Common myeloid progenitor, CD34-positive (primary cell): ENCODE measurements at regions of chr5 and their contacts with region 1.

Region 1: DNA sequence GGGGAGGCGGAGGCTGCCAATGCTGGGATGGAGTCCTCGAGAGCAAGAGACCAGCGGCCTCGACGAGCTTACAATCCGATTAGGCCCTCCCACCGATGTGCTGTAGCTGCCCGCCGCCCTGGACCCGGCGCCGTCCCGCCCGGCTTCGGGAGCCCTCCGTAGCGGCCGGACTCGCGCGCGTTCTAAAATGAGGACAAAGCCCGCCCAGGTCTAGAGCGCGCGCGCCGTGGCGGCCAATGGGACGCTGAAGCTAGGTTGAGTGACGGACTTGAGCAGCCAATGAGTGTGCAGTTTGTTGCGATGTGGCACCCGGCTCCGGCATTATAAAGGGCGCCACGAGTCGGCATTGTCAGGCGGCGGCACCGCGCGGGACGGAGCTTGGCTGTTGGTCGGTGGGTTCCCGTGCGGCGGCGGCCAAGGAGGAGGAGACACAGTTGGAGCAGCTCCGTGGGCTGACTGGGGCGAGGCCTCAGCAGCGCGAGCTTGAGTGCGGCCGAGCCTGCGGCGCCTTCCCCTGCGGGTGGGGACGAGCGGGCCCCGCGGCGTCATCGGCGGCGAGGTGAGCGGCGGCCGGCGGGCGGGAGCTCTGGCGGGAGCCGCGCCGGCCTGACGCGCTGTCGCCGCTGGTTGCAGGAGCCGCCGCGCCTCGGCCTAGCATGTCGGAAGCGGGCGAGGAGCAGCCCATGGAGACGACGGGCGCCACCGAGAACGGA is at the start of gene HNRNPAB:
- DNase-seq: peak; percentile 96 to 98 (median 97)
- H3K4me3 ChIP-seq: peak within 1 kb of the TSS; percentile 77 to 97 (median 90)
- H3K27ac ChIP-seq: peak within 1 kb of the TSS; percentile 46 to 80
- H3K4me1 ChIP-seq: peaks cover 12 to 59% (median 49%) of the 10 kb centered on the region in 4 experiments
- H3K27me3 ChIP-seq: no peaks in the 10 kb centered on the region

Region 2: DNA sequence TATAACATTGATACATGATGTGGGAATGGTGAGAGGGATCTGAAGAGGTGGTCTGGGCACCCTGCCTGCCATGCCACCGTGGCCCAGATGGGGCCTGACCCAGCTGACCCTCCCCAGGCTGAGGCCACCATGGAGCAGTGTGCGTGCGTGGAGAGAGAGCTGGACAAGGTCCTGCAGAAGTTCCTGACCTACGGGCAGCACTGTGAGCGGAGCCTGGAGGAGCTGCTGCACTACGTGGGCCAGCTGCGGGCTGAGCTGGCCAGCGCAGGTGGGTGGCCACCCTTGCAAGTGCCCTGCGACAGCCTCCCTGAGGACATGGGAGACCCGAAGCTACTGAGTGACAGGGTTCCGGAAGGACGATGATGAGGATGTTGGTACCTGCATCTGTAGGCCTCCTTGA is 66.3 kb before region 1 on chr5:
- CTCF ChIA-PET with region 1: no interaction called
- POLR2A ChIA-PET with region 1: no interaction called
- DNase-seq: no peak
- H3K4me3 ChIP-seq: no peak overlapping the region
- H3K27ac ChIP-seq: no peak overlapping the region
- H3K4me1 ChIP-seq: no peaks in the 10 kb centered on the region
- H3K27me3 ChIP-seq: no peaks in the 10 kb centered on the region

Region 3: GRCh38 chr5:178182158-178182876 is 22.0 kb before region 1 on chr5:
- CTCF ChIA-PET with region 1: interaction called, 15 read pairs
- POLR2A ChIA-PET with region 1: interaction called, 25 read pairs
- DNase-seq: peak; percentile 94 to 100 (median 99)
- H3K4me3 ChIP-seq: peak overlapping the region in 3 of 7 experiments; percentile 1 to 28 (median 15)
- H3K27ac ChIP-seq: peak overlapping the region in 1 of 2 experiments; percentile 60
- H3K4me1 ChIP-seq: peaks cover 7 to 39% (median 24%) of the 10 kb centered on the region in 4 experiments
- H3K27me3 ChIP-seq: no peaks in the 10 kb centered on the region

Region 4: DNA sequence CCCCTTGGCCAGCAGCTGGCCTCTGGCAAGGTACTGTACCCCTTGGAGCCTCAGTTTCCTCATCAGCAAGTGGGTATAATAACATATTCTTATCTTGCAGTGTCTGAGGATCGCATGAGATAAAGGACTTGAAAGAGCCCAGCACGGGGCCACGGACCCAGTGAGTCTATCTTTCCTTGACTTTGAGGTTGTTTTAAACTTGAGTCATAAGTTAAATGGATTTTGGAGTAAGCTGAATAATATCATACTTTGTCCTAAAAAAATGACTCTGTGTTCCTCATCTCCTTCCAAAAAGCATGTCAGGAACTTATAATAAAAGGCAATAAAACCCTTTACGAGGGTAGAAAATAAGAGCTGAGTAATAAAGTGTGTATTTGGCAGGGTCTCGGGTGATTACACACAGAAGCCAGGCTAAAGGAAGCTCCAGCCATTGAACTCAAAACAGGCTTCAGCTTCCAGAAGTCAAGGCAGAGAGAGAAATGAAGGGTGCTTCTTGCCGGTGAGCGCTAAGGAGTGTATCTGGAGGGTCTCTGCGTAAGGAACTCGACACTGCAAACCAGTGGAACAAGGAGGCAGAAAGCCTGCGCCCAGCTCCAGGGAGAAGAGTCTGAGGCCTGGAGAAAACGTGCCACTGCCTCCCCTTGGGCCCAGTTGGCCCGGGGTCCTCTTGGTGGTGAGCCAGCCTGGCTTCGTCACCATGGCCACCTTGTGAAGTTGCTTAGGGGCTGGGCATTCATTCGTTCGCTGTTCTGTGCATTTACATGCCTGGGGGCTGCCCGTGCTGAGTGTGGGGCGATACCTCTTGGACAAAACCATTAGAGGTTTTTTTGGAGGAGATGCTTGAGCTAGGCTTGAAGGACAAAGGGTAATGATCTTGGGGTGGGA is 100.7 kb after region 1 on chr5:
- CTCF ChIA-PET with region 1: no interaction called
- POLR2A ChIA-PET with region 1: no interaction called
- DNase-seq: no peak
- H3K4me3 ChIP-seq: no peak overlapping the region
- H3K27ac ChIP-seq: no peak overlapping the region
- H3K4me1 ChIP-seq: peaks cover 0 to 8% (median 0%) of the 10 kb centered on the region in 4 experiments
- H3K27me3 ChIP-seq: peaks cover 0 to 2% (median 0%) of the 10 kb centered on the region in 5 experiments